ENCODE measurements at regions of chr14 and their contacts with region 1.

Region 1: DNA sequence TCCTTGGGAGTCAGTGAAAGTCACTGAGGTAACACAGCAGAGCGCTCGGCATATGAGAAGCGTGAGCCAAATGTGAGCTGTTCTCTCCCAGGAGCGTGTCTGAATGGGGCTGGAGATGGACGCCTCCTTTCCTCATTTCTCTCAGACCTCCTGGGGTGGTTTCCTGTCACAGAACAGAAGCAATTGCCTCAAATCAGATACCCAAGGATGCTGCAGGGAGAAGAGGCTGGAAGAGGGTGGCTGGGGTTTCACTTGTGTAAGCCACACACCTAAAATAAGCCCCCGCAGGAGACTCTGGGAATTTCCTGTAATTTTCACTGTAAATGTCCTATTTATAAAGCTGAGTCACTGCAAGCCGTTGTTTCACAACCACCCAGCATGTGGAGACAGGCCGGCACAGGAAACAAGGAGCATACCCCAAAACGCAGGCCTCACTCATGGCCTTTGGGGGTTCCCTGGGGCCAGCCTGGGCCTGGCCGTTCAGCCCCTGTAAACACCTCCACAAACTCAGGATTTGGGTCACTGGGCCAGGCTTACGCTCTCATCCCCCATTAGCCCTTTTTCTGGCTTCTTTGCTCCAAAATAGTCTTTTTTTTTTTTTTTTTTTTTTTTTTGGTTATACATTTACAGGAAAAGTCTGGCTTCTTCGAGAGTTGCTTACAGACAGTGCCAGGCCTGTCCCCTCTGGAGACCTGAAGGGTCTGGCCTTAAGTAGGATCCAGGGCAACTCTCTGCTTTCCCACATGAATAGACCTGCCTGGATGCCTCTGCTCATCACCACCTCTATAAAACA is 55.3 kb downstream of the VCPKMT start:
- DNase-seq: peak; percentile 64
- H3K4me3 Mint-ChIP-seq: peak overlapping the region; percentile 85
- H3K27ac Mint-ChIP-seq: peak overlapping the region; percentile 98
- H3K4me1 Mint-ChIP-seq: peaks cover 75% of the 10 kb centered on the region
- H3K27me3 Mint-ChIP-seq: no peaks in the 10 kb centered on the region

Region 2: DNA sequence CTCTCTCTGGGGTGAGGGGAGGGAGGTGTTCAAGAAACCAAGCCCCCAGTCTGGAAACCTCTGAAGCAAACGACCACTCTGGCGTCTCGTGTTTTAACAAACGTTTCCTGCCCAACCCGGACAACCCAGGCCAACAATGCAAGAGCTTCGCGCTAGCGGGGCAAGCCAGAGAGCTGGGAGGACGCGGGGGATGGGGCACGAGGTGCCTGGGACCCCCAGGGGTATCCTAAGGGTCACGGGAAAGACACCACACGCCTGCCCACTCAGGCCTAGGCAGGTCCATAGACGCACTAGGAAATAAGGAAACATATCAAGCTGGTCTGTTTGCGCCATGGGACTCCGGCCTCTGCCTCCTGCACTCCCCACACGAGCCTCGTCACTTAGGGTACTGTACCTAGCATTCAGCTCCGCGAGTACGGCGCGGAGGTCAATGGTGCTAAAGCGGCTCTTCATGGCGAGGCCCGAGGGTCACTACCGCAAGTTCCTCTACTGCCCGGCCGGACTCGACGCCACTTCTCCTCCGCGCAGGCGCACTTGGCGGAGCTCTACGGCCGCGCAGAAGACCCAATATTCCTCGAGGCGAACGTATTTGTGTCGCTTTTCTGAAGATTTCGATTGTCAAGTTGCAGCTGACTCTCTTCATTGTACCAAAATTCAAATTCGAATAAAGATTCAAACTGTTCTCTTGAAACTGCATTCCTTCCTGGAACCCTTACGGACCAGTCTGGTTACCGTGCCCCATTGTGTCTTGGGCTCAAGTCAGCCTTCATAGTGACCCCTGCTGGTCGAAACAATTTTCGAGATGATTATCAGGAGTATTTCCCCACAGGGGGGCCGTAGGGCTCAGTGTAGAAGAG is 208.5 kb before region 1 on chr14 and contains the start of gene NEMF:
- CTCF ChIA-PET with region 1: interaction called, 6 read pairs
- intact Hi-C with region 1: loop called (anchors 1 kb)
- DNase-seq: peak; percentile 90
- H3K4me3 Mint-ChIP-seq: peak within 1 kb of the TSS; percentile 98
- H3K27ac Mint-ChIP-seq: peak within 1 kb of the TSS; percentile 97
- H3K4me1 Mint-ChIP-seq: peaks cover 37% of the 10 kb centered on the region
- H3K27me3 Mint-ChIP-seq: no peaks in the 10 kb centered on the region
- total RNA-seq, gene NEMF: 45.5 to 47.0 TPM

Region 3: GRCh38 chr14:49892636-49893308 is 168.3 kb before region 1 on chr14 and contains the start of gene ARF6:
- CTCF ChIA-PET with region 1: interaction called, 4 read pairs
- intact Hi-C with region 1: loop called (anchors 1 kb)
- DNase-seq: peak; percentile 98
- H3K4me3 Mint-ChIP-seq: peak within 1 kb of the TSS; percentile 100
- H3K27ac Mint-ChIP-seq: peak within 1 kb of the TSS; percentile 100
- H3K4me1 Mint-ChIP-seq: peaks cover 19% of the 10 kb centered on the region
- H3K27me3 Mint-ChIP-seq: no peaks in the 10 kb centered on the region
- total RNA-seq, gene ARF6: 128 to 129 TPM

Region 4: GRCh38 chr14:49977126-49977841 is 83.8 kb before region 1 on chr14:
- CTCF ChIA-PET with region 1: interaction called, 5 read pairs
- intact Hi-C with region 1: loop called (anchors 1 kb)
- DNase-seq: peak; percentile 66
- H3K4me3 Mint-ChIP-seq: peak overlapping the region; percentile 22
- H3K27ac Mint-ChIP-seq: peak overlapping the region; percentile 83
- H3K4me1 Mint-ChIP-seq: peaks cover 85% of the 10 kb centered on the region
- H3K27me3 Mint-ChIP-seq: no peaks in the 10 kb centered on the region

Region 5: DNA sequence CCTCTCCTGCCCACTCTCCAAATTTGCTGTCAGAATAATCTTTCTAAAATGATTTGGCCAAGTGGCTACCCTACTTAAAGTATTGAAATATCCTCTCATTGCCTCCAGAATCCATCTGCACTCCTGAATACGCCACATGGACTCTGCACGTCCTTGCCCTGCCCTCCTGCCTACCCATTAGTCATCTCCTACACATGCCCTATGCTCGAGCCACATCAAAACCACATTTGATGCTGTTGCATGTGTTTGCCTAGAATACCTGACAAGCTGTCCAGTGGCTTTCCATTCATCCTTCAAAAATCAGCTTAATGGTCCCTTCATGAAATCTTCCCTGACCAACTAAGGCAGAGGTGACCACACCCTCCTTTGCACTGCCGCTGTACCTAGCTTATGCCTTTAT is 38.3 kb after region 1 on chr14:
- CTCF ChIA-PET with region 1: interaction called, 10 read pairs
- intact Hi-C with region 1: loop called (anchors 1 kb)
- DNase-seq: no peak
- H3K4me3 Mint-ChIP-seq: no peak overlapping the region
- H3K27ac Mint-ChIP-seq: no peak overlapping the region
- H3K4me1 Mint-ChIP-seq: peaks cover 57% of the 10 kb centered on the region
- H3K27me3 Mint-ChIP-seq: no peaks in the 10 kb centered on the region